HepG2 (cell line): ENCODE measurements at regions of chr6 and their contacts with region 1.

Region 1: GRCh38 chr6:11585426-11586016 is 48.0 kb downstream of the TMEM170B start:
- DNase-seq: peak; percentile 55
- ATAC-seq: peak; percentile 62
- H3K4me3 ChIP-seq: no peak overlapping the region
- H3K27ac ChIP-seq: no peak overlapping the region
- H3K4me1 ChIP-seq: peaks cover 13% of the 10 kb centered on the region
- H3K27me3 ChIP-seq: no peaks in the 10 kb centered on the region; a peak in 1 of 5 replicates
- CTCF ChIP-seq: peak; percentile 74
- EP300 ChIP-seq: no peak
- POLR2A ChIP-seq: no peak
- RAD21 ChIP-seq: peak; percentile 51; the same call in 1 of the 2 replicates

Region 2: GRCh38 chr6:11514672-11515071 is 70.8 kb before region 1 on chr6:
- CTCF ChIA-PET with region 1: no interaction called
- POLR2A ChIA-PET with region 1: no interaction called
- in situ Hi-C with region 1: no loop called
- intact Hi-C with region 1: no loop called
- DNase-seq: no peak
- ATAC-seq: no peak
- H3K4me3 ChIP-seq: no peak overlapping the region
- H3K27ac ChIP-seq: no peak overlapping the region
- H3K4me1 ChIP-seq: no peaks in the 10 kb centered on the region
- H3K27me3 ChIP-seq: 0 out of 5 replicates have a peak, but pooled peaks cover 0 to 3% of the 10 kb centered on the region in 2 experiments
- CTCF ChIP-seq: no peak
- EP300 ChIP-seq: no peak
- POLR2A ChIP-seq: no peak
- RAD21 ChIP-seq: no peak

Region 3: DNA sequence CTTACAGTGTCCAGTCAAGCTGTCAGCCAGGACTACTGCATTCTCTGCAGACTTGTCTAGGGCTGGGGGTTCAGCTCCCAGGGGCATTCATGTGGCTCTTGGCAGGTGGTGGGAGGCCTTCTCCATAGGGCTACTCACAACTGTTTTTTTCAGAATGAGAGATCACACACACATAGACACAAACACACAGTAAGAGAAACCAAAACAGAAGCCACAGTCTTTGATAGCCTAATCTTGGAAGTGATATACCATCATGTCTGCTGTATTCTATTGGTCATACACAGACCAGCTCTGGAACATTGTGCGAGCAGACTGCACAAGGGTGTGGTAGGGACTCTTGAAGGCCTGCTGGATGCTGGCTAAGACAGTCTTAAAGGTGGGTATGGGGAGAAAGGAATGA is 34.5 kb before region 1 on chr6:
- CTCF ChIA-PET with region 1: no interaction called
- POLR2A ChIA-PET with region 1: no interaction called
- in situ Hi-C with region 1: no loop called
- intact Hi-C with region 1: no loop called
- DNase-seq: no peak
- ATAC-seq: no peak; the same call in none of the 3 replicates
- H3K4me3 ChIP-seq: no peak overlapping the region
- H3K27ac ChIP-seq: no peak overlapping the region
- H3K4me1 ChIP-seq: no peaks in the 10 kb centered on the region
- H3K27me3 ChIP-seq: no peaks in the 10 kb centered on the region
- CTCF ChIP-seq: no peak
- EP300 ChIP-seq: no peak
- POLR2A ChIP-seq: no peak
- RAD21 ChIP-seq: no peak

Region 4: DNA sequence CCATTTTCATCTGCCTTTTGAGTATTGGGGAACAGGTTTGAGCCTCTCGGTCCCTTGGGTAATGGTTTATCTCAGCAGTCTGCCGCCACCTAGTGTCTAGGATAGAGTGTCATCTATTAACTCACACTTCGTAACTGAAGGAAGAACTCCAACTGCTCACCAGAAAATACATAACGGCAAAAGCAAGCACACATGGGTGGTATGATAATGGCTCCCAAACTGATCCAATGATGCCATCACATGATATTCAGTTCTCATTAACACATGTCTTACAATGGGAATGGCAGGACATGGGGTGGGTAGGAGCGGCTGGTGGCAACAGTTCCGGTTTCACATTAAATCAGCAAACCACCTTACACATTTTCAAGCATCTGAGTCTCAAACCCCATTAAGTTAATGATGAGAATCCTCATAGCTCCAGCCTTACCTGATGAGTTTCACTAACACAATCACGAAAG is 1020.4 kb after region 1 on chr6:
- CTCF ChIA-PET with region 1: interaction called, 5 read pairs
- POLR2A ChIA-PET with region 1: no interaction called
- in situ Hi-C with region 1: loop called (anchors 10 kb)
- intact Hi-C with region 1: loop called (anchors 1 kb)
- DNase-seq: peak; percentile 72
- ATAC-seq: peak; percentile 97
- H3K4me3 ChIP-seq: no peak overlapping the region
- H3K27ac ChIP-seq: no peak overlapping the region
- H3K4me1 ChIP-seq: no peaks in the 10 kb centered on the region
- H3K27me3 ChIP-seq: no peaks in the 10 kb centered on the region
- CTCF ChIP-seq: peak; percentile 93
- EP300 ChIP-seq: no peak
- POLR2A ChIP-seq: no peak
- RAD21 ChIP-seq: peak; percentile 76

Region 5: GRCh38 chr6:12890171-12890790 is 1304.8 kb after region 1 on chr6:
- CTCF ChIA-PET with region 1: no interaction called
- POLR2A ChIA-PET with region 1: no interaction called
- in situ Hi-C with region 1: no loop called
- intact Hi-C with region 1: loop called (anchors 5 kb)
- DNase-seq: peak; percentile 24
- ATAC-seq: peak; percentile 72
- H3K4me3 ChIP-seq: no peak overlapping the region
- H3K27ac ChIP-seq: no peak overlapping the region
- H3K4me1 ChIP-seq: peaks cover 4% of the 10 kb centered on the region; the same call in 1 of the 2 replicates
- H3K27me3 ChIP-seq: peaks cover 1 to 10% of the 10 kb centered on the region in 2 experiments; a peak in 1 of 5 replicates
- CTCF ChIP-seq: peak; percentile 52
- EP300 ChIP-seq: no peak
- POLR2A ChIP-seq: no peak
- RAD21 ChIP-seq: no peak